Activated T-helper 2 cell treated with anti-CD3 and anti-CD28 coated beads, Interferon-gamma antibody, Interleukin-2, Interleukin-4, amounts not matched to agents 10 μg/mL and 5 μg/mL and 100 μg/mL, durations not matched to agents 14 hours and 24 hours and 36 hours (primary cell): ENCODE measurements at regions of chr5 and their contacts with region 1.

Region 1: DNA sequence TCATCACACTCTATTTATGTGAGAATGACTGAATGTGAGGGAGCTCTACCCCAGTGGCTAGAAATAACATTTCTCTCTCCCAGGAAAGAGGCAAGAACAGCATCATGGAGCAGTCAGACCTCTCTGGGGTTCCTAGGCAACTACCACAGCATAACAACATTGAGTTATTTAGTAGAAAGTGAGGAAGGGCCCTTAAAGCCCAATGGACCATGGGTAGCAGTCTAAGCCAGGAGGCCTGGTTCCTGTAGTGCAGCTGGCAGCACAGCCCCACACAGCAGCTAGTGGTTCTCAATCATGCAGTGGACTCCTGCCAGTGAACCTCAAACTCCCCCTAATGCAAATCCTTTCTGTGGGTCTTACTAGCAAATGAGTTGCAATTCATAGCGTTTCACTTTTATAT is 55.3 kb downstream of the SPEF2 start:
- DNase-seq: peak; percentile 16
- H3K4me3 Mint-ChIP-seq: no peak overlapping the region
- H3K27ac Mint-ChIP-seq: peak overlapping the region; percentile 42
- H3K4me1 Mint-ChIP-seq: peaks cover 46% of the 10 kb centered on the region
- H3K27me3 Mint-ChIP-seq: no peaks in the 10 kb centered on the region

Region 2: GRCh38 chr5:35736280-35736679 is 63.3 kb after region 1 on chr5:
- intact Hi-C with region 1: loop called (anchors 5 kb)
- DNase-seq: no peak
- H3K4me3 Mint-ChIP-seq: no peak overlapping the region
- H3K27ac Mint-ChIP-seq: peak overlapping the region; percentile 69
- H3K4me1 Mint-ChIP-seq: peaks cover 22% of the 10 kb centered on the region
- H3K27me3 Mint-ChIP-seq: no peaks in the 10 kb centered on the region

Region 3: DNA sequence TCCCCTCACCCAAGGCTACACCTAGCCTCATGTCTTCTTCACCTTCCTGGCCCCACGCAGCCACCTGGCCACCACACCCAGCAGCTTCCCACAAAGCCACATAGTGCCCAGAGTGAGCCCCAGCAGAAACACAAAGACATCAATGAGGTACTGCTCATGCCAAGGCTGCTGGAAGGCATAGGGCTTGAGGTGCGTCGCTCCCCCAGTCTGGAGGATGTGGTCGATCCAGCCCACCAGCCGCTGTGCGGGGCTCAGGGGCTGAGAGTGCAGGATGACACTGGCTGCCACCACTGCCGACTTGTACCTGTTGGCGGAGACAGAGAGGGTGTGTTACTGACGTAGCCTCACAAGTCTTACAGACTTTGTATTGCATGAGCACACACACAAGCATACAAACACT is 281.2 kb after region 1 on chr5:
- intact Hi-C with region 1: no loop called
- DNase-seq: no peak
- H3K4me3 Mint-ChIP-seq: no peak overlapping the region
- H3K27ac Mint-ChIP-seq: no peak overlapping the region
- H3K4me1 Mint-ChIP-seq: no peaks in the 10 kb centered on the region
- H3K27me3 Mint-ChIP-seq: peaks cover 37% of the 10 kb centered on the region